ENCODE measurements at regions of chr3 and their contacts with region 1.

Region 1: GRCh38 chr3:71111784-71112440 is 471.6 kb downstream of the FOXP1 start:
- DNase-seq: no peak
- ATAC-seq: no peak
- H3K4me3 ChIP-seq: no peak overlapping the region
- H3K4me3 Mint-ChIP-seq: no peak overlapping the region
- H3K27ac ChIP-seq: no peak overlapping the region
- H3K27ac Mint-ChIP-seq: peak overlapping the region; percentile 66 to 72
- H3K4me1 ChIP-seq: peaks cover 0 to 15% of the 10 kb centered on the region in 2 experiments
- H3K4me1 Mint-ChIP-seq: peaks cover 65 to 88% (median 84%) of the 10 kb centered on the region in 3 donors
- H3K27me3 ChIP-seq: no peaks in the 10 kb centered on the region
- H3K27me3 Mint-ChIP-seq: no peaks in the 10 kb centered on the region

Region 2: DNA sequence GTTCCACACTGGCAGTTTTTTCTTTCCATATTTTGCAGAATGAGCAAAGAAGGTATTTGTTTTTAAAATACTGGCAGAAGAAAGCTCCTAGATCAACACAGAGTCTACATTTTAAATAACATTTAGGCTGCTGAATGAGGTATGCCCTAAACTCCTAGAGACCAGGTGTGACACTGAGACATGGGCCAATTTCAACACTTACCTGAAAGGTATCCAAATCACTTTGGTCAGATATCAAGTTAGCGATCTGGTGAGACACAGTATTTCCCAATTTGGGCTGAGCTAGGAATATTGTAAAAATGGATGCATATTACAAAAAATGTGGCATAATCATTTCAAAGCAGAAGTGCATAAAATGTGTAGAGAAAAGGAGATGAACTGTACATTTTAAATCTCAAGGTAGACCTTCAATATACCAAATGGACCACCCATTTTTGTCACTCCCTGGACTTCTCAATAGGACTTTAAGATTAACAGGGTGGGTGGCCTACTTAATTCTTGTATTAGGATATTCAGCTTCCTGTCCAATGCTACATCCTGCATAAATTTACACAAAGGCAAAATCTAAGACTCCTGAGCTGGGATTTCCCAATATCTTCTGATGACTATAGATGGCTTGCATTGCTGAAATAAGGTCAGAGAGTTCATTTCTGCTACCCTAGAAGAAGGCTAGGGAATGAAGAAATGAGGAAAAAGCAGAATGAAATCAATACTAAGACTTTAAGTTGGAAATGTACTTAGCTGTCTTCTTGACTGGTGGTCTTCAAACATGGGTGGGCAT is 16.2 kb before region 1 on chr3:
- CTCF ChIA-PET with region 1: interaction called in 1 of 2 experiments, 3 read pairs
- POLR2A ChIA-PET with region 1: interaction called in 1 of 2 experiments, 14 read pairs
- DNase-seq: no peak
- ATAC-seq: no peak
- H3K4me3 ChIP-seq: no peak overlapping the region
- H3K4me3 Mint-ChIP-seq: no peak overlapping the region
- H3K27ac ChIP-seq: no peak overlapping the region
- H3K27ac Mint-ChIP-seq: peak overlapping the region; percentile 30 to 45
- H3K4me1 ChIP-seq: peaks cover 17 to 22% of the 10 kb centered on the region in 2 experiments
- H3K4me1 Mint-ChIP-seq: peaks cover 83 to 89% (median 88%) of the 10 kb centered on the region in 3 donors
- H3K27me3 ChIP-seq: no peaks in the 10 kb centered on the region
- H3K27me3 Mint-ChIP-seq: no peaks in the 10 kb centered on the region

Region 3: DNA sequence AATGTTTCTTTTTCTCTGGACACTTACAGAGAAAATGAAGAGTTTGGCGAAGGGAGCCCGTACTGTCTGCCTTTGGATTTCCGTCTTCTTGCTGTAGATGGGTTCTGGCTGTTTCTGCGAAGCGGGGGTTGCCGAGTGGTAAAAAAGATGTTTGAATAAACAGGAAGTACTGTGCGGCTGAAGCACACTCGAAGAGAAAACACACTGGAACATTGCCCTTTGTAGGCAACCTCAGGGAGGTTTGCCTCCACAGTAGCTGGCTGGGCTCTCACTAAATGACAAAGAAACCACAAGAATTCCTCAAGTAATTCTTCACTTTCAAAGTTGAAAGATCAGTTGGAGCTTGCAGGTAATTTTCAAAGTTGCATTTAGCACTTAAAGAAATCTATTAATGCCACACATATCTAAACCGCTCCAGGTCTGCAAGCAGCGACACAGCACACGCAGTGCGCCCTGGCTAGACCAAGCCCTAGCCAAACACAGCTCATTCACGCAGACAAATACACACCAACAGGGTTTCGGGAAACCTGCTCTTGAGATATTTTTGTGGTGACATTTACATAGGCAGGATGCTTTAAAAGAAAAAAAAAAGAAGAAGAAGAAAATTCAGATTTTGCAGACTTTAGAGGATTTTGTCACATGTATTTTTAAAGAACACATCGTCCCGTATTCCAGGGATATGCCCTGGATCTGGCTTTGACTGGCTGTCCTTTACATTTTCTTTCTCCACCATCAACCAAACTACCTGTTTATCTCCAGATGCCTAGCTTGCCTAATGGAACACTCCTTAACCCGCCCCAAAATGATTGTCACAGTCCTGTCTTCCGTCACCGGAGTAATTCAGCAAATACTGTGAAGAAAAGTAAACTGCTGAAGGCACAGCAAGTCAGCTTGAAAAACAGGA is 18.8 kb after region 1 on chr3:
- CTCF ChIA-PET with region 1: no interaction called
- POLR2A ChIA-PET with region 1: interaction called in 1 of 2 experiments, 10 read pairs
- DNase-seq: peak; percentile 42 to 89 (median 79)
- ATAC-seq: peak; percentile 82 to 89 (median 85)
- H3K4me3 ChIP-seq: peak overlapping the region; percentile 56 to 73
- H3K4me3 Mint-ChIP-seq: peak overlapping the region; percentile 83 to 91 (median 91)
- H3K27ac ChIP-seq: peak overlapping the region; percentile 86
- H3K27ac Mint-ChIP-seq: peak overlapping the region; percentile 97 to 99
- H3K4me1 ChIP-seq: peaks cover 50 to 63% of the 10 kb centered on the region in 2 experiments
- H3K4me1 Mint-ChIP-seq: peaks cover 79 to 93% (median 80%) of the 10 kb centered on the region in 3 donors
- H3K27me3 ChIP-seq: no peaks in the 10 kb centered on the region
- H3K27me3 Mint-ChIP-seq: no peaks in the 10 kb centered on the region

Measured in T-cell (primary cell).